HAP-1 (cell line): ENCODE measurements at regions of chr14 and their contacts with region 1.

Region 1: DNA sequence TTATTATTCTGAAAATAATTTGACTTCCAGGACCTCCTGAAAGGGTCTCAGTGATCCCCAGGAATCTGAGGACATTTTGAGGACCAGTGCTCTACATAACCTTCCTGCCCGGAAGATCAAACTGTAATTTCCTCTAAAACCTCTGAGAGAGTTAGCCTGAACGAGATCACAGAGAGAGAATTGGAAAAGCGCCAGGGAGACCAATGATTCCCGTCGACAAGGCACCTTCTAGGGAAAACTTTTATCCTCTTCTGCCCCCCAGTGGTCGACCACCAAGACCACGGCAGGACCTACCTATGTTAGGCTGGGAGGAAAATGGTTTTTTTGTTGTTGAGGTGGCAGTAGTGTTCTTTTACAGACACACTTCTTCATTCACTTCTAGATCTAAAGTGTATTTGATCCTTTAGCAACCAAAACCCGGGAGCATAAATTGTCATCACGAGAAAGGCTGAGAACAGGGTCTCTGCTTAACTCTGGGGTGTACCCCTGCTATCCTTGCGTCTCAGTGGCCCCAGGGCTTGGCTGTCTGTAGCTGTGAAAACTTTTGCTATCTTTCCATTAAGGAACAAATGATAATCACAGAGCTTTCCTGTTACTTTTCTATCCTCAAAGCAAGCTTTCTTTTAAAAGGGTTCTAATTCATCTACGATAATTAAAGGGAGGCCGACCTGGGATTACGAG is 62.9 kb upstream of the NID2 start:
- DNase-seq: peak; percentile 88 to 95
- H3K4me3 ChIP-seq: no peak overlapping the region
- H3K4me1 ChIP-seq: peaks cover 4% of the 10 kb centered on the region
- H3K27me3 ChIP-seq: no peaks in the 10 kb centered on the region

Region 2: GRCh38 chr14:51807356-51807755 is 324.4 kb before region 1 on chr14:
- in situ Hi-C with region 1: loop called (anchors 25 kb)
- DNase-seq: no peak
- H3K4me3 ChIP-seq: no peak overlapping the region
- H3K4me1 ChIP-seq: no peaks in the 10 kb centered on the region
- H3K27me3 ChIP-seq: peaks cover 4% of the 10 kb centered on the region; the same call in 1 of the 2 replicates

Region 3: DNA sequence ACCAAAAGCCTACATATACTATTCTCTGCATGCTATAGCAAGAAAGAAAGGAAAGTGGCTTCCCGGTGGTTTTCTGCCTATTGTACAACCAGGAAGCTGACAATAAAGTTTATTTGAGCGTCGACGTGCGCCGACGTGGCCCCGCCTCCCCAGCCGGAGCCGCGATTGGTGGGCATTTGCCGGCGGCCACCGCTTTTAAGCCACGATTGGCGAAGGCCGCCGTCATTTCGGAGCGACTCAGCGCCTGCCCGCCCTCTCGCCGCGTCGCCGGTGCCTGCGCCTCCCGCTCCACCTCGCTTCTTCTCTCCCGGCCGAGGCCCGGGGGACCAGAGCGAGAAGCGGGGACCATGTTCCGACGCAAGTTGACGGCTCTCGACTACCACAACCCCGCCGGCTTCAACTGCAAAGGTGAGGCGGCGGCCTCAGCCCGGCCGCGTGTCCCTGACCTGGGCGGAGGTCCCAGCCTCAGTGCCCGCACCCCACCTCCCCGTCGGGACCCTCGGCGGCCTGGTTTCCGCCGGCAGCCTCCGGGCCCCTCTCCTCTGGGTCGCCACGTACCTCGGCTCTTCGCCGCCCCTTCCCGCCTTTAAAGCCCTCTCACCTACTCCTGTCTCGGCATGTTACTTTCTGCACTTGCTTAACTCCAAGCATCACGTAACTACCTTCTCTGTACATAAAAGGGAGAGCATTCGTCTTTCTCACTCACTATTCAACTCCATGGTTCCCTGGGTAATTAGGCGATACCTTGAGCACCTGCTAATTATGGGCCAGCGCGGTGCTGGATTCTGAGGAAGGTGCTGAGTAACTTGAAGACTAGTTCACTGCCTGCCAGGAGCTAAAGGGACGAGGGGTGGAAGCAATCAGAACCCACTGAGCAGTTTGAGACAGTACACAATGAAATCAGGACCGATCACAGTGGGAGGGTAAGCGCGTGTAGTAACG is 142.2 kb before region 1 on chr14 and contains the start of gene RTRAF:
- in situ Hi-C with region 1: loop called (anchors 10 kb)
- DNase-seq: peak; percentile 89 to 94
- H3K4me3 ChIP-seq: peak within 1 kb of the TSS; percentile 83
- H3K4me1 ChIP-seq: peaks cover 13% of the 10 kb centered on the region
- H3K27me3 ChIP-seq: no peaks in the 10 kb centered on the region